ENCODE measurements at regions of chr1 and their contacts with region 1.

Region 1: DNA sequence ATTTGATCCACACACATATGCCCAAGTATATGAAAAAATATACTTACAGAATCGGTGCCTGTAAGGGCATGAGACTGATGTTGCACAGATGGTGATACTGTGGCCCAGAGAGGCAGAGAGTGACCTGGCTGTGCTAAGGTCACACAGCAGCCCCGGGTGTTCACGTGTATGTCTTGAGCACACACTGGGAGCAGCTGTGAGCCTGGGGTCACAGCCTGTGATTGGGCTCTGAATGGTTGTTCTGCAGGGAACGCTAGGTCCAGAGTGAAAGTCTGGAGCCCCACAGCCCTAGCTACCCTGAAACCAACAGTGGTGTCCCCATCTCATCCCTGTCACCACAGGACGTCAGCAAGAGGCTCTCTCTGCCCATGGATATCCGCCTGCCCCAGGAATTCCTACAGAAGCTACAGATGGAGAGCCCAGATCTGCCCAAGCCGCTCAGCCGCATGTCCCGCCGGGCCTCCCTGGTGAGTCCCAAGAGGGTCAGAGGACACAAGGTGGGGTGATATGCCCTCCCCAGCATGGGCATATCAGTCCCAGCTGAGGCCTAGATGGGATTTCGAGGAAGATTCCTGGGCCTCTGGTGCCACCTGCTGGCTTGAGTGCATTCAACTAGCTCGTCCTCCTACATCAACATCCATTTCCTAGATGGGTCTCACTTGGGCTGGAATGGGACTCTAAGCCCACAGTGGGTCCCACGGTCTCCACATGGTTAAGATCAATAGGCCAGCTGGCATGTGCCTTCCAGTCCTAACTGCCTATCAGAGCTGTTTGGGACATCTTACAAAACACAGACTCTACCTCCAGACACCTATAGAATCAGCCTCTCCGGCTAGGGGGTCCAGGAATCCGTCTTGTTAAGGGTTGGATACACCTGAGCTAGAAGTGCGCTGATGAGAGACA is 19.7 kb downstream of the CDK18 start:
- DNase-seq: no peak
- ATAC-seq: peak; percentile 80
- H3K4me3 ChIP-seq: no peak overlapping the region
- H3K27ac ChIP-seq: no peak overlapping the region
- H3K4me1 ChIP-seq: no peaks in the 10 kb centered on the region
- H3K27me3 ChIP-seq: peaks cover 0 to 1% of the 10 kb centered on the region in 2 experiments; a peak in 3 of 4 replicates
- CTCF ChIP-seq: peak; percentile 75 to 85 (median 77)
- EP300 ChIP-seq: no peak
- POLR2A ChIP-seq: no peak
- RAD21 ChIP-seq: peak; percentile 79

Region 2: GRCh38 chr1:205273551-205273982 is 250.6 kb before region 1 on chr1:
- CTCF ChIA-PET with region 1: interaction called, 29 read pairs
- POLR2A ChIA-PET with region 1: no interaction called
- RAD21 ChIA-PET with region 1: interaction called, 17 read pairs
- SMC1A ChIA-PET with region 1: interaction called, 8 read pairs
- in situ Hi-C with region 1: no loop called
- intact Hi-C with region 1: loop called (anchors 10 kb)
- DNase-seq: peak; percentile 32
- ATAC-seq: peak; percentile 90
- H3K4me3 ChIP-seq: no peak overlapping the region
- H3K27ac ChIP-seq: no peak overlapping the region
- H3K4me1 ChIP-seq: peaks cover 3% of the 10 kb centered on the region; the same call in 1 of the 2 replicates
- H3K27me3 ChIP-seq: peaks cover 0 to 2% of the 10 kb centered on the region in 2 experiments; a peak in 1 of 4 replicates
- CTCF ChIP-seq: peak; percentile 92 to 98 (median 98)
- EP300 ChIP-seq: peak in 1 of 2 experiments; percentile 38; a peak in 1 of 4 replicates
- POLR2A ChIP-seq: no peak
- RAD21 ChIP-seq: peak; percentile 96

Region 3: GRCh38 chr1:205354259-205354904 is 169.8 kb before region 1 on chr1:
- CTCF ChIA-PET with region 1: interaction called, 72 read pairs
- POLR2A ChIA-PET with region 1: no interaction called
- RAD21 ChIA-PET with region 1: interaction called, 29 read pairs
- SMC1A ChIA-PET with region 1: interaction called, 29 read pairs
- in situ Hi-C with region 1: no loop called
- intact Hi-C with region 1: loop called (anchors 1 kb)
- DNase-seq: peak; percentile 9
- ATAC-seq: peak; percentile 91
- H3K4me3 ChIP-seq: no peak overlapping the region
- H3K27ac ChIP-seq: no peak overlapping the region
- H3K4me1 ChIP-seq: no peaks in the 10 kb centered on the region
- H3K27me3 ChIP-seq: peaks cover 0 to 4% of the 10 kb centered on the region in 2 experiments; a peak in 3 of 4 replicates
- CTCF ChIP-seq: peak; percentile 74 to 83 (median 83)
- EP300 ChIP-seq: no peak
- POLR2A ChIP-seq: no peak
- RAD21 ChIP-seq: peak; percentile 69

Region 4: GRCh38 chr1:205430696-205431305 is 93.3 kb before region 1 on chr1:
- CTCF ChIA-PET with region 1: interaction called, 15 read pairs
- POLR2A ChIA-PET with region 1: no interaction called
- RAD21 ChIA-PET with region 1: interaction called, 8 read pairs
- SMC1A ChIA-PET with region 1: interaction called, 13 read pairs
- in situ Hi-C with region 1: no loop called
- intact Hi-C with region 1: no loop called
- DNase-seq: peak; percentile 13
- ATAC-seq: peak; percentile 85
- H3K4me3 ChIP-seq: peak overlapping the region; percentile 54; the same call in 1 of the 2 replicates
- H3K27ac ChIP-seq: no peak overlapping the region
- H3K4me1 ChIP-seq: peaks cover 3% of the 10 kb centered on the region
- H3K27me3 ChIP-seq: peaks cover 3 to 4% of the 10 kb centered on the region in 2 experiments; a peak in 2 of 4 replicates
- CTCF ChIP-seq: peak; percentile 53 to 85 (median 72)
- EP300 ChIP-seq: peak in 1 of 2 experiments; percentile 38; a peak in 1 of 4 replicates
- POLR2A ChIP-seq: no peak
- RAD21 ChIP-seq: peak; percentile 45

Region 5: GRCh38 chr1:205504311-205504984 is 19.7 kb before region 1 on chr1 and contains the start of gene CDK18:
- CTCF ChIA-PET with region 1: interaction called, 891 read pairs
- POLR2A ChIA-PET with region 1: interaction called, 4 read pairs
- RAD21 ChIA-PET with region 1: interaction called, 16 read pairs
- SMC1A ChIA-PET with region 1: interaction called, 32 read pairs
- in situ Hi-C with region 1: no loop called
- intact Hi-C with region 1: no loop called
- DNase-seq: no peak
- ATAC-seq: peak; percentile 80
- H3K4me3 ChIP-seq: peak within 1 kb of the TSS; percentile 71
- H3K27ac ChIP-seq: no peak within 1 kb of the TSS
- H3K4me1 ChIP-seq: 0 out of 2 replicates have a peak, but pooled peaks cover 4% of the 10 kb centered on the region
- H3K27me3 ChIP-seq: peaks cover 0 to 5% of the 10 kb centered on the region in 2 experiments; a peak in 3 of 4 replicates
- CTCF ChIP-seq: no peak
- EP300 ChIP-seq: no peak
- POLR2A ChIP-seq: no peak
- RAD21 ChIP-seq: no peak
- polyA plus RNA-seq, gene CDK18: not detected

Region 6: GRCh38 chr1:205631727-205632373 is 107.7 kb after region 1 on chr1 and contains the start of gene ELK4:
- CTCF ChIA-PET with region 1: interaction called, 19 read pairs
- POLR2A ChIA-PET with region 1: no interaction called
- RAD21 ChIA-PET with region 1: interaction called, 18 read pairs
- SMC1A ChIA-PET with region 1: interaction called, 22 read pairs
- in situ Hi-C with region 1: no loop called
- intact Hi-C with region 1: no loop called
- DNase-seq: peak; percentile 87
- ATAC-seq: peak; percentile 73
- H3K4me3 ChIP-seq: peak within 1 kb of the TSS; percentile 93
- H3K27ac ChIP-seq: peak within 1 kb of the TSS; percentile 74
- H3K4me1 ChIP-seq: peaks cover 13% of the 10 kb centered on the region
- H3K27me3 ChIP-seq: no peaks in the 10 kb centered on the region
- CTCF ChIP-seq: peak; percentile 70 to 98 (median 86); a peak in 5 of 6 replicates
- EP300 ChIP-seq: no peak; a peak in 1 of 4 replicates
- POLR2A ChIP-seq: peak; percentile 93
- RAD21 ChIP-seq: peak; percentile 79
- polyA plus RNA-seq, gene ELK4: 5.2 to 11.9 TPM

Measured in GM12878 (cell line).